ENCODE measurements at regions of chr1 and their contacts with region 1.

Region 1: GRCh38 chr1:110407260-110408210 is at the start of gene LAMTOR5:
- DNase-seq: peak; percentile 61 to 94
- ATAC-seq: peak; percentile 95 to 96
- H3K4me3 ChIP-seq: peak within 1 kb of the TSS; percentile 98
- H3K27ac ChIP-seq: peak within 1 kb of the TSS; percentile 98 to 99
- H3K4me1 ChIP-seq: peaks cover 14% of the 10 kb centered on the region
- CTCF ChIP-seq: no peak
- EP300 ChIP-seq: no peak
- POLR2A ChIP-seq: peak; percentile 69
- RAD21 ChIP-seq: peak; percentile 31 to 49; a peak in 3 of 5 replicates
- polyA plus RNA-seq, gene LAMTOR5: 256 and 314 TPM in 2 replicates

Region 2: DNA sequence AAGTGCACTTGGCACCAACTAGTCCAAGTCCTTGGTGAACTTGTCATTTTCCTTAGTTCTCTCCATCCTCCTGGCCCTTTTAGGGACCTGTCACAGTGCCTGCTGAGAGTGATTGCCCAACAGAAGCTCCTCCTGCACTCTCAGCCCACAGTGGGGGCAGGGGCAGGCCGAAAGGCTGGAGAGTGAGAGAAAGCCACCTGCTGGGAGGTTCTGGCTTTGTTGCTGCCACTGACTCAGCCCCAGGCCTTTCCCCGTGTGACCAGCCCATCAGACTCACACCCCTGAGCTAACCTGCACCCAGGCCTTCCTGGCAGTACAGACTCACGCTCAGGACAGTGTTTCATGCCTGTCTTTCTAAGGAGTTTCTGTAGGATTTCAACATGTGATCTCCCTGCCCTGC is 26.3 kb after region 1 on chr1:
- CTCF ChIA-PET with region 1: interaction called, 140 read pairs
- POLR2A ChIA-PET with region 1: no interaction called
- DNase-seq: peak; percentile 54 to 64
- ATAC-seq: peak; percentile 96 to 97
- H3K4me3 ChIP-seq: no peak overlapping the region
- H3K27ac ChIP-seq: peak overlapping the region; percentile 20 to 73; a peak in 4 of 6 replicates
- H3K4me1 ChIP-seq: peaks cover 12% of the 10 kb centered on the region
- CTCF ChIP-seq: peak; percentile 11; the same call in 1 of the 3 replicates
- EP300 ChIP-seq: no peak
- POLR2A ChIP-seq: no peak
- RAD21 ChIP-seq: 0 out of 5 replicates have a peak, but pooled peaks of 1 of the 2 experiments have one; percentile 29

Region 3: GRCh38 chr1:110523011-110523410 is 115.5 kb after region 1 on chr1:
- CTCF ChIA-PET with region 1: no interaction called
- POLR2A ChIA-PET with region 1: no interaction called
- DNase-seq: no peak
- ATAC-seq: peak; percentile 35 to 53; a peak in 4 of 6 replicates
- H3K4me3 ChIP-seq: no peak overlapping the region
- H3K27ac ChIP-seq: peak overlapping the region in 1 of 2 experiments; percentile 41; a peak in 1 of 6 replicates
- H3K4me1 ChIP-seq: peaks cover 16% of the 10 kb centered on the region
- CTCF ChIP-seq: no peak
- EP300 ChIP-seq: no peak
- POLR2A ChIP-seq: no peak
- RAD21 ChIP-seq: no peak